Body of pancreas (tissue), 4 donors: ENCODE measurements at regions of chr5 and their contacts with region 1.

Region 1: GRCh38 chr5:95730730-95731570 is at the start of gene RHOBTB3:
- DNase-seq: peak; percentile 94 to 97 (median 96)
- ATAC-seq: peak; percentile 80
- H3K4me3 ChIP-seq: peak within 1 kb of the TSS; percentile 75 to 86
- H3K27ac ChIP-seq: peak within 1 kb of the TSS; percentile 97 to 99 (median 98)
- H3K4me1 ChIP-seq: peaks cover 69% of the 10 kb centered on the region
- H3K27me3 ChIP-seq: no peaks in the 10 kb centered on the region
- CTCF ChIP-seq: peak in 1 of 7 experiments; percentile 5
- POLR2A ChIP-seq: peak; percentile 90 to 91 (median 90)
- total RNA-seq, gene RHOBTB3: 153 to 196 TPM

Region 2: DNA sequence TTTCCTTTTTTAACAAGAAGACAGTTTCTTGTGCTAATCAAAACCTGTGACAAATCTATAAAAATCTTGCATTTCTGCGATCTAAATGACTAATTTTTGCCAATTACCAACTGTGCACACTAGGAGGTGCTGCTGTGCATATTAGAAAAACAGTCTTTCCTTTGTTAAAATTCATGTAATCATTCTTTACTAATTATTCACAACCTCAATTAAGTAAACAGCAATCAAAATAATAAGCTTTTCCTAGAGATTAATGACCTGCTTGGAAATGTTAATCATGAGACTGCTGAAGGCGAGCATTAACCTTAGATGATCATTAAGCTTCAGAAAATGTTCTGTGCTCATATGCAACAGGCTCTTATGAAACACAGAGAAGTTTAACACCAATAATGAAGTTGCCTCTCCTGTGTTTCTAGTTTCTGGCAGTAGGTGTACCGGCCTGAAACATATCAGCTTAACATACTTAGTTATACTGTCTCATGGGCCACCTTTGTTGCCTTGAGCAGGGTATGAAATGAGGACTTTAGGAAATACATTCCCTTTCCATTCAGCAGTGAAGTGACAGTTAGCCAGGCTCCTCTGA is 66.7 kb before region 1 on chr5:
- intact Hi-C with region 1: loop called (anchors 10 kb)
- DNase-seq: peak; percentile 41 to 55 (median 51)
- ATAC-seq: peak; percentile 78
- H3K4me3 ChIP-seq: no peak overlapping the region
- H3K27ac ChIP-seq: peak overlapping the region in 3 of 4 donors; percentile 46 to 65 (median 64)
- H3K4me1 ChIP-seq: peaks cover 17% of the 10 kb centered on the region
- H3K27me3 ChIP-seq: no peaks in the 10 kb centered on the region
- CTCF ChIP-seq: peak; percentile 52 to 88 (median 78)
- POLR2A ChIP-seq: no peak